Right lobe of liver (tissue), 6 donors: ENCODE measurements at regions of chr14 and their contacts with region 1.

Region 1: GRCh38 chr14:94439453-94440057 is 13.0 kb downstream of the SERPINA11 start:
- DNase-seq: no peak
- ATAC-seq: peak in 2 of 4 donors; percentile 15 to 50
- H3K4me3 ChIP-seq: no peak overlapping the region
- H3K27ac ChIP-seq: no peak overlapping the region
- H3K4me1 ChIP-seq: no peaks in the 10 kb centered on the region
- H3K27me3 ChIP-seq: no peaks in the 10 kb centered on the region
- CTCF ChIP-seq: no peak
- POLR2A ChIP-seq: no peak

Region 2: GRCh38 chr14:94485944-94486841 is 46.6 kb after region 1 on chr14:
- intact Hi-C with region 1: loop called (anchors 5 to 10 kb)
- DNase-seq: peak; percentile 68 to 77 (median 76)
- ATAC-seq: peak; percentile 75 to 89 (median 87)
- H3K4me3 ChIP-seq: peak overlapping the region in 2 of 3 donors; percentile 23 to 28
- H3K27ac ChIP-seq: no peak overlapping the region
- H3K4me1 ChIP-seq: peaks cover 0 to 26% (median 12%) of the 10 kb centered on the region in 4 donors
- H3K27me3 ChIP-seq: no peaks in the 10 kb centered on the region
- CTCF ChIP-seq: peak; percentile 98 to 100 (median 99)
- POLR2A ChIP-seq: peak; percentile 26